ENCODE measurements at regions of chr11 and their contacts with region 1.

Region 1: GRCh38 chr11:43944761-43945311 is 2.4 kb downstream of the C11orf96 start:
- DNase-seq: peak; percentile 75
- H3K4me3 ChIP-seq: peak overlapping the region in 2 of 4 donors; percentile 54 to 55
- H3K27ac ChIP-seq: peak overlapping the region; percentile 80 to 94 (median 88)
- H3K4me1 ChIP-seq: peaks cover 0 to 29% (median 15%) of the 10 kb centered on the region in 4 donors
- H3K27me3 ChIP-seq: peaks cover 54% of the 10 kb centered on the region
- CTCF ChIP-seq: peak; percentile 69 to 86 (median 75)
- EP300 ChIP-seq: no peak
- POLR2A ChIP-seq: no peak

Region 2: GRCh38 chr11:43895601-43896000 is 49.2 kb before region 1 on chr11:
- in situ Hi-C with region 1: no loop called
- intact Hi-C with region 1: loop called (anchors 5 kb)
- DNase-seq: no peak
- H3K4me3 ChIP-seq: no peak overlapping the region
- H3K27ac ChIP-seq: no peak overlapping the region
- H3K4me1 ChIP-seq: no peaks in the 10 kb centered on the region
- H3K27me3 ChIP-seq: no peaks in the 10 kb centered on the region
- CTCF ChIP-seq: no peak
- EP300 ChIP-seq: no peak
- POLR2A ChIP-seq: no peak

Region 3: DNA sequence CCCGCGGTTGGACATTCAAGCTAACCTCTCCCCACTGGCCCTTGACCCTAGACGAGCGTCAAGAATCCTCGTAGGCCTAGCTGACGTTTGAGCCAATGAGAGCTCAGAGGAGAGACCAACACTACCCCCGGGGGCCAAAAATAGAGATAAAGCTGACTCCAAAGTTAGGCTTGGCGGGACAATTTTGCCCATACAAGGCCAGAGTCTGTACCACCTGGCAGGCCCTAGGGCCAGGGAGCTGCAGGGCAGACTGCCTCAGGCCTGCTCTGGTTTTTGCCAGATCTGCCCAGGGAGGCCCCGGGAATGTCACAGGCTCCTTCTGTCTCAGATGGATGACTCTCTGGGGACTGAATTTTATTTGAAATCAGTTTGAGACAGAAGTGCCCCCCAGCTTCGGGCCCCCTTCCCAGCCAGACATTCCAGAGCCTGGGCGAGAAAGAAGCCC is 62.1 kb after region 1 on chr11:
- in situ Hi-C with region 1: no loop called
- intact Hi-C with region 1: loop called (anchors 2 kb)
- DNase-seq: no peak
- H3K4me3 ChIP-seq: no peak overlapping the region
- H3K27ac ChIP-seq: no peak overlapping the region
- H3K4me1 ChIP-seq: peaks cover 0 to 2% (median 0%) of the 10 kb centered on the region in 4 donors
- H3K27me3 ChIP-seq: no peaks in the 10 kb centered on the region
- CTCF ChIP-seq: no peak
- EP300 ChIP-seq: no peak
- POLR2A ChIP-seq: no peak